CD4-positive, alpha-beta memory T cell (primary cell): ENCODE measurements at regions of chr15 and their contacts with region 1.

Region 1: GRCh38 chr15:51776952-51777574 is 25.7 kb downstream of the TMOD2 start:
- DNase-seq: peak; percentile 55 to 64 (median 58)
- H3K4me3 ChIP-seq: no peak overlapping the region
- H3K4me3 Mint-ChIP-seq: no peak overlapping the region
- H3K27ac ChIP-seq: no peak overlapping the region
- H3K27ac Mint-ChIP-seq: peak overlapping the region in 2 of 7 donors; percentile 12 to 36
- H3K4me1 ChIP-seq: no peaks in the 10 kb centered on the region
- H3K4me1 Mint-ChIP-seq: peaks cover 4 to 9% (median 7%) of the 10 kb centered on the region in 4 donors
- H3K27me3 ChIP-seq: no peaks in the 10 kb centered on the region
- H3K27me3 Mint-ChIP-seq: no peaks in the 10 kb centered on the region

Region 2: GRCh38 chr15:51185213-51186159 is 591.6 kb before region 1 on chr15:
- CTCF ChIA-PET with region 1: no interaction called
- POLR2A ChIA-PET with region 1: no interaction called
- intact Hi-C with region 1: no loop called
- DNase-seq: no peak
- H3K4me3 ChIP-seq: no peak overlapping the region
- H3K4me3 Mint-ChIP-seq: no peak overlapping the region
- H3K27ac ChIP-seq: no peak overlapping the region
- H3K27ac Mint-ChIP-seq: no peak overlapping the region
- H3K4me1 ChIP-seq: no peaks in the 10 kb centered on the region
- H3K4me1 Mint-ChIP-seq: no peaks in the 10 kb centered on the region
- H3K27me3 ChIP-seq: no peaks in the 10 kb centered on the region
- H3K27me3 Mint-ChIP-seq: peaks cover 0 to 7% of the 10 kb centered on the region in 2 donors

Region 3: GRCh38 chr15:51536965-51537574 is 240.0 kb before region 1 on chr15:
- CTCF ChIA-PET with region 1: interaction called, 3 read pairs
- POLR2A ChIA-PET with region 1: no interaction called
- intact Hi-C with region 1: loop called (anchors 5 kb)
- DNase-seq: no peak
- H3K4me3 ChIP-seq: no peak overlapping the region
- H3K4me3 Mint-ChIP-seq: no peak overlapping the region
- H3K27ac ChIP-seq: no peak overlapping the region
- H3K27ac Mint-ChIP-seq: no peak overlapping the region
- H3K4me1 ChIP-seq: no peaks in the 10 kb centered on the region
- H3K4me1 Mint-ChIP-seq: no peaks in the 10 kb centered on the region
- H3K27me3 ChIP-seq: no peaks in the 10 kb centered on the region
- H3K27me3 Mint-ChIP-seq: no peaks in the 10 kb centered on the region

Region 4: GRCh38 chr15:51649659-51650521 is 127.2 kb before region 1 on chr15:
- CTCF ChIA-PET with region 1: interaction called, 283 read pairs
- POLR2A ChIA-PET with region 1: interaction called, 23 read pairs
- intact Hi-C with region 1: loop called (anchors 1 kb)
- DNase-seq: peak; percentile 65 to 72 (median 68)
- H3K4me3 ChIP-seq: no peak overlapping the region
- H3K4me3 Mint-ChIP-seq: no peak overlapping the region
- H3K27ac ChIP-seq: no peak overlapping the region
- H3K27ac Mint-ChIP-seq: no peak overlapping the region
- H3K4me1 ChIP-seq: no peaks in the 10 kb centered on the region
- H3K4me1 Mint-ChIP-seq: no peaks in the 10 kb centered on the region
- H3K27me3 ChIP-seq: no peaks in the 10 kb centered on the region
- H3K27me3 Mint-ChIP-seq: no peaks in the 10 kb centered on the region

Region 5: GRCh38 chr15:51726351-51727073 is 50.6 kb before region 1 on chr15:
- CTCF ChIA-PET with region 1: interaction called, 24 read pairs
- POLR2A ChIA-PET with region 1: interaction called, 6 read pairs
- intact Hi-C with region 1: no loop called
- DNase-seq: peak in 1 of 5 donors; percentile 60
- H3K4me3 ChIP-seq: no peak overlapping the region
- H3K4me3 Mint-ChIP-seq: peak overlapping the region in 1 of 8 donors; percentile 70
- H3K27ac ChIP-seq: no peak overlapping the region
- H3K27ac Mint-ChIP-seq: peak overlapping the region; percentile 69 to 98 (median 83)
- H3K4me1 ChIP-seq: peaks cover 66% of the 10 kb centered on the region
- H3K4me1 Mint-ChIP-seq: peaks cover 46 to 76% (median 59%) of the 10 kb centered on the region in 4 donors
- H3K27me3 ChIP-seq: no peaks in the 10 kb centered on the region
- H3K27me3 Mint-ChIP-seq: no peaks in the 10 kb centered on the region

Region 6: DNA sequence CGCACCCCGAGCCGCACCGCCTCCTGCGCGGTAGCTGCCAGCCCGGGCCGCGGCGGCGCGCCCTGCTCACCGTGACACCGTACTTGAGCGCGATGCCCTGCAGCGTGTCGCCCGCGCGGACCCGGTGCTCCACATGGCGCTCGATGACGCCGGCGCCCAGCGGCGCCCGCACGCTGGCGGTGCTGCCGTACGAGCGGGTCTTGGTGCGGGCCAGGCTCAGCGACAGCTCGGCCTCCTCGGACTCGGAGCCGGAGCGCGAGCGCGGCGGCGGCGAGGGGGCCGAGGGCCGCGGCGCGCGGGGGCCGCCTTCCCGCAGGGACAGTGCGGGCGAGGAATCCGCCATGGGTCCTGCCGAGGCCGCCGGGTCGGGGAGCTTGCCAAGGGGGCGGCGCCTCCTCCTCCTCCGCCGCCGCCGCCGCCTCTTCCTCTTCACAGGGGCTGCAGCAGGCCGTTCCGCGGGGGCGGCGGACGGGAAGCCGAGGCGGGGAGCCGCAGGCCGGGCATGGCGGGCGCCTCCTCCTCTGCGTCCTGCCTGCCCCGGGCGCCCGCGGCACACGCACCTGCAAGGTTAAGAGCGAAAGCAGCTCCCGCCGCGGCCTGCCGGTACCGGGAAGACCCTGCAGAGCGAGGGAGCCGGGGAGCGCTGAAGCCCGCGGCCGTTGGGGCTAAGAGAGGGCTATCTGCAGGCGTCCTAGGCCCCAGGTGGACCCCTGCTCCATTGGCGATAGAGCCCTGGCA is 39.6 kb before region 1 on chr15 and contains the start of gene LYSMD2:
- CTCF ChIA-PET with region 1: interaction called, 38 read pairs
- POLR2A ChIA-PET with region 1: interaction called, 15 read pairs
- intact Hi-C with region 1: loop called (anchors 1 kb)
- DNase-seq: peak; percentile 66 to 75 (median 72)
- H3K4me3 ChIP-seq: peak within 1 kb of the TSS; percentile 57 to 62
- H3K4me3 Mint-ChIP-seq: peak within 1 kb of the TSS; percentile 90 to 97 (median 92)
- H3K27ac ChIP-seq: peak within 1 kb of the TSS; percentile 65
- H3K27ac Mint-ChIP-seq: peak within 1 kb of the TSS; percentile 97 to 98 (median 98)
- H3K4me1 ChIP-seq: peaks cover 66% of the 10 kb centered on the region
- H3K4me1 Mint-ChIP-seq: peaks cover 45 to 66% (median 53%) of the 10 kb centered on the region in 4 donors
- H3K27me3 ChIP-seq: no peaks in the 10 kb centered on the region
- H3K27me3 Mint-ChIP-seq: no peaks in the 10 kb centered on the region
- total RNA-seq, gene LYSMD2: 33.0 to 35.2 TPM

Region 7: GRCh38 chr15:52227456-52227855 is 450.4 kb after region 1 on chr15:
- CTCF ChIA-PET with region 1: no interaction called
- POLR2A ChIA-PET with region 1: no interaction called
- intact Hi-C with region 1: loop called (anchors 2 kb)
- DNase-seq: peak; percentile 68 to 78 (median 69)
- H3K4me3 ChIP-seq: no peak overlapping the region
- H3K4me3 Mint-ChIP-seq: no peak overlapping the region
- H3K27ac ChIP-seq: no peak overlapping the region
- H3K27ac Mint-ChIP-seq: peak overlapping the region in 1 of 7 donors; percentile 60
- H3K4me1 ChIP-seq: peaks cover 8% of the 10 kb centered on the region
- H3K4me1 Mint-ChIP-seq: peaks cover 10 to 21% (median 14%) of the 10 kb centered on the region in 4 donors
- H3K27me3 ChIP-seq: no peaks in the 10 kb centered on the region
- H3K27me3 Mint-ChIP-seq: no peaks in the 10 kb centered on the region